ENCODE measurements at regions of chr4 and their contacts with region 1.

Region 1: DNA sequence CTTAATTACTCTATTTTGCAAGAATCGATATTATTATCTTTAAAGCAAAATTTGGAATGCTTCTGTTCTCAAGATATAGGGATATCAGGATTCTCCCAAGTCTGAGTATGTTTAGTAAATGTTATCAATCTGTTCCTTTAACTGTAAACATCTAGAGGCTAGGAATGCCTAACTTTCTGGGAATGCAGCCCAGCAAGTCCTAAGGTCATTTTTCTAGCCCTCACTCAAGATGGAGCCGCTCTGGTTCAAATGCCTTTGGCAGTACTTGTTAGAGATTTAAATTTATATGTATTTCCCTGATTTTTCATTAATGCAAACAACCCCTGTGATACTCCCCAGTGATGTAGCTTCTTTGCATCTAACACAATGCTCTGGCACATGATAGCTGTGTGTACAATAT is 623.8 kb upstream of the LCORL start:
- DNase-seq: no peak

Region 2: GRCh38 chr4:18689308-18690115 is 44.2 kb after region 1 on chr4:
- intact Hi-C with region 1: no loop called
- DNase-seq: no peak

Region 3: DNA sequence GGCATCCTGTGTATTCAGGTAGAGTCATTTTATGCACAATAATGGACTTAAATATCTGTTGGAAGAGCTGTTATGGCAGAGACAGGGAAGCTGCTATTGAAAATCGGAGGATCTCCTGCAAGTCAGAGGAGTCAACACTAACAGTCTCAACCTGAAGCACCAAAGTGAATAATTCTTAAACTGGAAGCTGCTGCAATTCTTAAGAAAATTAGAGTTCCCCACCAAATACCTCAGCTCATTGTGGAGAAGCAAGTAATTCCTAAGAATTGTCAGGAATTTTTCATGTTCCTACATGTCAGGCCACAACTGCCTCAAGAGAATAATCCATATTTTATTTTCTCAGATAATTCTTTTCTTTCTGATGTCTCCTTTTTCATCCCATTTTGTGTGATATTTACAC is 268.8 kb after region 1 on chr4:
- intact Hi-C with region 1: loop called in 1 of 2 experiments (anchors 10 kb)
- DNase-seq: no peak